Naive thymus-derived CD4-positive, alpha-beta T cell (primary cell): ENCODE measurements at regions of chr7 and their contacts with region 1.

Region 1: DNA sequence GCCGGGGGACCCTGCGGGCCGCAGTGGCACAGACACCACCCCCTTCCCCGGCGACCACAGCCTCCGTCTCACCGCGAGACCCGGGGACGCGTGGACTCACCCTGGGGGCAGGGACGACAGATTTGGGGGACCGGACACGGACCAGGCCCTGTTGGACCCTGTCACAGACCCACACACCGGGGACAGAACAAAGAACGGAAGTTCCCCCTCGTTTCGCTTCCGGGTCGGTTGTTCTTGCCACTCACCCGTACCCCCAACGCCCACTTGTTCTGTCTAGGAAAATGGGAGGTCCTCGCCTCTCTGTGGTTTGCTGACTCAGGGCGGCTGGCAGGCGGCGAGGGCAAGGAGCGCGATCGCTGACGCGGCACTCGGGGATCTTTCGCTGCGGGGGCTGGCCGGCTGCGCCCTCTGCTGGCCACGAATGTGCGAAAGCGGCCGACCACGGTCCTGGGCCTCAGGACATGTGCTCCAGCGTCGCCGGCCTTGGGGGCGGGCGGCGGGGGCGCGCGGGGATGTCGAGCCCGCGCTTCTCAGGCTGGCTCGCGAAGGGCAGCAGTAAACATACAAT is at the start of gene ZNF3:
- DNase-seq: peak; percentile 87 to 98 (median 97)
- ATAC-seq: peak; percentile 94
- H3K4me3 ChIP-seq: peak within 1 kb of the TSS; percentile 78
- H3K4me3 Mint-ChIP-seq: peak within 1 kb of the TSS; percentile 89 to 96 (median 92)
- H3K27ac ChIP-seq: peak within 1 kb of the TSS; percentile 82
- H3K27ac Mint-ChIP-seq: peak within 1 kb of the TSS; percentile 64 to 98 (median 91)
- H3K4me1 ChIP-seq: peaks cover 5 to 18% of the 10 kb centered on the region in 2 donors
- H3K4me1 Mint-ChIP-seq: peaks cover 26 to 46% (median 41%) of the 10 kb centered on the region in 7 donors
- H3K27me3 ChIP-seq: no peaks in the 10 kb centered on the region
- H3K27me3 Mint-ChIP-seq: peaks cover 0 to 19% (median 0%) of the 10 kb centered on the region in 5 donors
- total RNA-seq, gene ZNF3: 29.1 to 48.0 (median 35.0) TPM

Region 2: GRCh38 chr7:99616359-99617191 is 465.0 kb before region 1 on chr7 and contains the start of gene ZSCAN25:
- CTCF ChIA-PET with region 1: no interaction called
- POLR2A ChIA-PET with region 1: no interaction called
- intact Hi-C with region 1: loop called (anchors 2 to 5 kb)
- DNase-seq: peak; percentile 65 to 88 (median 85)
- ATAC-seq: peak; percentile 99
- H3K4me3 ChIP-seq: peak within 1 kb of the TSS; percentile 83
- H3K4me3 Mint-ChIP-seq: peak within 1 kb of the TSS; percentile 94 to 99 (median 98)
- H3K27ac ChIP-seq: peak within 1 kb of the TSS; percentile 90
- H3K27ac Mint-ChIP-seq: peak within 1 kb of the TSS; percentile 88 to 99 (median 97)
- H3K4me1 ChIP-seq: peaks cover 12 to 14% of the 10 kb centered on the region in 2 donors
- H3K4me1 Mint-ChIP-seq: peaks cover 30 to 55% (median 48%) of the 10 kb centered on the region in 7 donors
- H3K27me3 ChIP-seq: no peaks in the 10 kb centered on the region
- H3K27me3 Mint-ChIP-seq: peaks cover 0 to 4% (median 0%) of the 10 kb centered on the region in 5 donors
- total RNA-seq, gene ZSCAN25: 33.9 to 51.6 (median 43.8) TPM

Region 3: GRCh38 chr7:99997545-99998137 is 84.0 kb before region 1 on chr7:
- CTCF ChIA-PET with region 1: interaction called, 6 read pairs
- POLR2A ChIA-PET with region 1: interaction called, 3 read pairs
- intact Hi-C with region 1: loop called (anchors 1 kb)
- DNase-seq: peak; percentile 55 to 76 (median 72)
- ATAC-seq: peak; percentile 96
- H3K4me3 ChIP-seq: peak overlapping the region; percentile 43
- H3K4me3 Mint-ChIP-seq: peak overlapping the region; percentile 71 to 85 (median 76)
- H3K27ac ChIP-seq: peak overlapping the region; percentile 71
- H3K27ac Mint-ChIP-seq: peak overlapping the region; percentile 57 to 95 (median 87)
- H3K4me1 ChIP-seq: peaks cover 7 to 11% of the 10 kb centered on the region in 2 donors
- H3K4me1 Mint-ChIP-seq: peaks cover 7 to 21% (median 18%) of the 10 kb centered on the region in 7 donors
- H3K27me3 ChIP-seq: no peaks in the 10 kb centered on the region
- H3K27me3 Mint-ChIP-seq: peaks cover 0 to 3% (median 0%) of the 10 kb centered on the region in 5 donors

Region 4: DNA sequence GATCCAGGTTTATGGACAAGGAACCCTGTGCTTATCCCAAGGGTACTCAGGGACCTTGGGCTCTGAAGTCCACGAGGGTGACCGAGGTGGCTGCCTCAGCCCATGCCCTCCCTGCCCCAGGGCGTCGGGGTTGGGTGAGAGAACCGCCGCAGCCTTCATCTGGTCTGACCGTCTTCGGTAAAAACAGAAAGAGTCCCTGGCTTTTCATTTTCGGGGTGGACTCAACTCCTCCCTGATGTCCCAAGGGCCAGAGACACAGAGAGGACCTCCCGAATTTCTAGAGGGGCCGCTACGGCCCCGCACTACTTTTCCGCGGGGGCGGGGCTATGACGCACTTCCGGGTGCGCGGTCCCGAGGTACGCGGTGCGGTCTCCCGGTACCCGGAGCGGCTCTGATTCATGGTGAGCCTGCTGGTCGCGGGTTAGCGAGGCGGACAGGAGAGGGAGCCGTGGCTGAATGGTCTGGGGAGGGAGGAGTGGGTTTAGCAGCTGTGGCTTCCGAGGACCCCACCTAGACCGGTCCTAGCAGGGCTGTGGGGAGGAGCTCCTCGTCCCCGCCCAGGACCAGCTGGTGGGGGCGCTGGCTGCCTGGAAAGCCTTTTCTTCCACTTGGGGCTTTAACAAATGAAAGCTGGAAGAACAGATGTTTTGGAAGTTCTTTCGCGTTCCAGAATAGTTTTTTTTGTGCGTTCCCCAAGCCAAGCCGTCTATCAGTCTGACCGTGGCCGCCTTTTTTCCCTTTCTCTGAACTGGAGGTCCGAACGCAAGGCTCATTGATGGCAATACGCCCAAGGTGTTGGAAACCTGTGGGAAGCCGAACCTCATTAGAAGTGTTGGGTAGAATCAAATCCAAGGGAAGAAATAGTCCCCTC is 31.9 kb before region 1 on chr7 and contains the start of gene ZSCAN21:
- CTCF ChIA-PET with region 1: interaction called, 3 read pairs
- POLR2A ChIA-PET with region 1: no interaction called
- intact Hi-C with region 1: loop called (anchors 1 to 2 kb)
- DNase-seq: peak; percentile 70 to 89 (median 78)
- ATAC-seq: peak; percentile 94
- H3K4me3 ChIP-seq: peak within 1 kb of the TSS; percentile 92
- H3K4me3 Mint-ChIP-seq: peak within 1 kb of the TSS; percentile 86 to 95 (median 92)
- H3K27ac ChIP-seq: peak within 1 kb of the TSS; percentile 95
- H3K27ac Mint-ChIP-seq: peak within 1 kb of the TSS; percentile 81 to 98 (median 97)
- H3K4me1 ChIP-seq: peaks cover 0 to 6% of the 10 kb centered on the region in 2 donors
- H3K4me1 Mint-ChIP-seq: peaks cover 4 to 29% (median 25%) of the 10 kb centered on the region in 7 donors
- H3K27me3 ChIP-seq: no peaks in the 10 kb centered on the region
- H3K27me3 Mint-ChIP-seq: peaks cover 0 to 3% (median 0%) of the 10 kb centered on the region in 5 donors
- total RNA-seq, gene ZSCAN21: 3.9 to 10.1 (median 6.2) TPM

Region 5: DNA sequence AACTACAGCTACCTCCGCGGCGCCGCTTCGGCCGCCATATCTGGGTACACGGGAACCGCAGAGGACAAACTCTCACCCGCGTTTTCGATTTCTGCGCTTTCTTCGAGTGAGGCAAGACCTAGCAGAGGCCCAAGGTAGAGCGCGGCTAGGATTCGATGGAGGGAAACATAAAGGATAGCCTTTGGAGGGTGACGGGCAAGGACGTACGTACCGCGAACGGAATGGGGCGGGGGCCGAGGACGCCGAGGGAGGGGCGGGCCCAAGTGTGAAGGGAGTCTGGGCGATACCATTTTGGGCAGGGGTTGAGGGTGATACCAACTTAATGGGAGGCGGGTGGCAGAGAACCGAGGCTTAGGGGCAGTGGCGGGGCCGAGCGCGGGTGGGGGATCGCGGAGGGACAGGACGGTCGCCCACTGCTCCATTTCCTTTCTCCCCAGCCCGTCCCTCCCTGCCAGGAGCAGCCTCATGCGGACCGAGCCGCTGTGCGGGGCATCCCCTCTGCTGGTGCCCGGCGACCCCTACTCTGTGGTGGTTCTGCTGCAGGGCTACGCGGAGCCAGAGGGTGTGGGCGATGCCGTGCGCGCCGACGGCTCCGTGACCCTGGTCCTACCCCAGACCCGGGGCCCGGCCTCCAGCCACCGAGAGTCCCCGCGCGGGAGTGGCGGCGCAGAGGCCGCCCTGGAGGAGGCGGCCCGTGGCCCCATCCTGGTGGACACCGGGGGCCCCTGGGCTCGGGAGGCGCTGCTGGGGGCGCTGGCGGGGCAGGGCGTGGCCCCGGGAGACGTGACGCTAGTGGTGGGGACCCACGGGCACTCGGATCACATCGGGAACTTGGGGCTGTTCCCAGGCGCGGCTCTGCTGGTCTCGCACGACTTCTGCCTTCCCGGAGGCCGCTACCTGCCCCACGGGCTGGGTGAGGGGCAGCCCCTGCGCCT is 45.6 kb after region 1 on chr7 and contains the start of gene MBLAC1:
- CTCF ChIA-PET with region 1: interaction called, 6 read pairs
- POLR2A ChIA-PET with region 1: interaction called, 14 read pairs
- intact Hi-C with region 1: loop called (anchors 1 to 2 kb)
- DNase-seq: peak; percentile 80 to 95 (median 91)
- ATAC-seq: peak; percentile 95
- H3K4me3 ChIP-seq: peak within 1 kb of the TSS; percentile 99
- H3K4me3 Mint-ChIP-seq: peak within 1 kb of the TSS; percentile 95 to 100 (median 98)
- H3K27ac ChIP-seq: peak within 1 kb of the TSS; percentile 98
- H3K27ac Mint-ChIP-seq: peak within 1 kb of the TSS; percentile 98 to 100 (median 99)
- H3K4me1 ChIP-seq: peaks cover 20 to 25% of the 10 kb centered on the region in 2 donors
- H3K4me1 Mint-ChIP-seq: peaks cover 13 to 46% (median 26%) of the 10 kb centered on the region in 7 donors
- H3K27me3 ChIP-seq: no peaks in the 10 kb centered on the region
- H3K27me3 Mint-ChIP-seq: no peaks in the 10 kb centered on the region
- total RNA-seq, gene MBLAC1: 4.5 to 6.3 (median 5.8) TPM